ENCODE measurements at regions of chr18 and their contacts with region 1.

Region 1: GRCh38 chr18:58493516-58494253 is 135.2 kb downstream of the ALPK2 start:
- DNase-seq: peak; percentile 58 to 82
- H3K4me3 ChIP-seq: no peak overlapping the region
- H3K4me1 ChIP-seq: no peaks in the 10 kb centered on the region; the same call in 1 of the 2 replicates
- H3K27me3 ChIP-seq: peaks cover 22% of the 10 kb centered on the region

Region 2: DNA sequence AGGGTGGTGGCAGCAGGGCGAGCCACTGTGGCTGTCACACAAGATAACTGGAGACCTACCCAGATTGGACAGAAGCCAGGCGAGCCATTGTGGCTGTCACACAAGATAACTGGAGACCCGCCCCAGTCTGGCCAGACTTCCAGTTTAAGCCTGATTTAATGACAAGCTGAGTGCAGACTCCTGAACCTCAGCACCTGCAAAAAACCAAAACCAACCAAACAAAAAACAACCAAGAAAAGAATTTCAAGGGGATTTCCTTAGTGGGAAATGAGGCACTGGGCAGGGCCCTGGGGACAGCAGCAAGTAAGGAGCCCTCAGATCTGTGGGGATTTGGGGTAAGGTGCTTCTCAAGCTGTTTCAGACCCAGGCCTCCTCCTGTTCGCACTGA is 1442.0 kb before region 1 on chr18:
- in situ Hi-C with region 1: no loop called
- DNase-seq: peak in 1 of 2 experiments; percentile 12
- H3K4me3 ChIP-seq: no peak overlapping the region
- H3K4me1 ChIP-seq: no peaks in the 10 kb centered on the region
- H3K27me3 ChIP-seq: no peaks in the 10 kb centered on the region

Region 3: DNA sequence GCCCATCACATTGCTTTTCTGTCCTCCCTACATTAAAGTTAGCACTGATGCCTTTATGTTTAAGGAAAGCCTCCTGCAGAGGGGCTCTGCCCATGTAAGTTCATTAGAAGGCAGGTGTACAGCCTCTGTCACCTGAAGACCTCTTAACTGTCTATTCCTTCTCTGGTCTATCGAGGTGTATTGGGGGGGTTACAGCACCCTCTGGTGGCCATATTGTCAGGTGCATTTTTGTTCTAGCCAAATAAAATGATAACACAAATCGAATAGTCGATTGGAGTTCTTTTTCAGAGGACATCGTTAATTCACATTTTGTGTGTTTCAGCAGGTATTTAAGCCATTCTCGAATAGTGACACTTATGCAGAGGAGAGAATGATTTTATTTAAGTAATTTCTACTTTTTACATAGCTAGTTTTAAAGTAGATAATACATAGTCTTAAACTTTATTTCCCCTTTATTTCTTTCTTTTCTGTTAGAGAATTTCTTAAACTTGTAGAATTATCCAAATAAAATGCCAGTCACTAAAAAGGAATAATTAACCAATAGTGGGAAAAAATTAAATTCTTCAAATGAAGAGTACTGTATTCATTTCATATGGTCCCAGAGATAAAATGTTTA is 312.8 kb before region 1 on chr18:
- in situ Hi-C with region 1: loop called (anchors 25 kb)
- DNase-seq: peak; percentile 53 to 78
- H3K4me3 ChIP-seq: no peak overlapping the region
- H3K4me1 ChIP-seq: no peaks in the 10 kb centered on the region
- H3K27me3 ChIP-seq: no peaks in the 10 kb centered on the region

Region 4: DNA sequence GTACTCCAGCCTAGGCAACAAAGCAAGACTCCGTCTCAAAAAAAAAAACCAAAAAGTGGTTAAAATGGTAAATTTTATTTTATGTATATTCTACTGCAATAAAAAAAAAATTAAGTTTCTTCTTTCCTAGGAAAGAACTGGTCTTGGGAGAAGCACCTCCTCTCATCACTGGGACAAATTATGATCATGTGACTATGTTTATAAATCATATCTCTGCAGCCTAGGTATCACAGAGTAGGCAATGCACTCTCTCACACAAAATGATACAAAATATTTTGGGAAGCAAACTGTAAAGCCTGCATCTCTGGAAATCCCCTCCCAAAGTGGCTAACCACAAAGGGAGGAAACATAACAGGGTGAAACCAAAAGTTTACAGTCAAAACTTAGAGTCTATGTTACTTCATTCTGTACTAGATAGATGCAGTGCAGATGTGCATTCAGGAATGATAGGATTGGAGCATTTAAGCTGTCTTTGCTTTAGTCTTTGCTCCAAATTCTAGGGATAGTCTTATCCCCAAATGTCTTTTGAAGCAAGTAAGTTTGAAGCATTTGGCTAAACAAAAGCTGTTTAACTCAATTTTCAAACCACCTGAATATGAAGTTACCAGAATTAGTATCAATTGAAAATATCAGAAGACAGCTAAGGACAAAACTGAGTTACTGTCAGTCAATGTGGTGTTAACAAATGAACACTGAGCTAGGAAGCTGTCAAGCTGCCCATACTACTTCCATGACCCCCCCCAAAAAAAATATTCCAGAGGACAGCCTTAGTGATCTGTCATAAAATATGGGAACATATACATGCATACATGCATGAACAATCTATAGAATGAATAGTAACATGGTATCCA is 156.5 kb after region 1 on chr18:
- in situ Hi-C with region 1: no loop called
- DNase-seq: no peak
- H3K4me3 ChIP-seq: no peak overlapping the region
- H3K4me1 ChIP-seq: no peaks in the 10 kb centered on the region
- H3K27me3 ChIP-seq: no peaks in the 10 kb centered on the region